Activated T-helper 1 cell treated with anti-CD3 and anti-CD28 coated beads, Interleukin-12 subunit alpha, Interleukin-12 subunit beta, Interleukin-2, Interleukin-4 antibody, amounts not matched to agents 30 ng/mL and 10 ng/mL and 1 ng/mL, durations not matched to agents 14 hours and 24 hours and 36 hours (primary cell): ENCODE measurements at regions of chr17 and their contacts with region 1.

Region 1: GRCh38 chr17:17972126-17972951 is at the starts of genes DRC3 and TOM1L2:
- DNase-seq: peak; percentile 100
- H3K4me3 Mint-ChIP-seq: peak within 1 kb of the TSS; percentile 94
- H3K27ac Mint-ChIP-seq: peak within 1 kb of the TSS; percentile 89
- H3K4me1 Mint-ChIP-seq: peaks cover 35% of the 10 kb centered on the region
- H3K27me3 Mint-ChIP-seq: peaks cover 2% of the 10 kb centered on the region
- total RNA-seq, gene DRC3: not detected in 2 replicates
- total RNA-seq, gene TOM1L2: 9.3 and 10.2 TPM in 2 replicates

Region 2: GRCh38 chr17:17237026-17237799 is 735.1 kb before region 1 on chr17 and contains the start of gene FLCN:
- intact Hi-C with region 1: loop called (anchors 1 kb)
- DNase-seq: peak; percentile 84
- H3K4me3 Mint-ChIP-seq: peak within 1 kb of the TSS; percentile 94
- H3K27ac Mint-ChIP-seq: peak within 1 kb of the TSS; percentile 99
- H3K4me1 Mint-ChIP-seq: peaks cover 25% of the 10 kb centered on the region
- H3K27me3 Mint-ChIP-seq: peaks cover 4% of the 10 kb centered on the region
- total RNA-seq, gene FLCN: 35.5 and 36.4 TPM in 2 replicates

Region 3: GRCh38 chr17:17681187-17681848 is 291.0 kb before region 1 on chr17 and contains the start of gene RAI1:
- intact Hi-C with region 1: loop called (anchors 5 kb)
- DNase-seq: peak; percentile 64
- H3K4me3 Mint-ChIP-seq: peak within 1 kb of the TSS; percentile 89
- H3K27ac Mint-ChIP-seq: peak within 1 kb of the TSS; percentile 84
- H3K4me1 Mint-ChIP-seq: peaks cover 22% of the 10 kb centered on the region
- H3K27me3 Mint-ChIP-seq: peaks cover 10% of the 10 kb centered on the region
- total RNA-seq, gene RAI1: 31.1 and 32.3 TPM in 2 replicates

Region 4: GRCh38 chr17:17859909-17860765 is 112.2 kb before region 1 on chr17:
- intact Hi-C with region 1: loop called (anchors 2 kb)
- DNase-seq: peak; percentile 59
- H3K4me3 Mint-ChIP-seq: no peak overlapping the region
- H3K27ac Mint-ChIP-seq: no peak overlapping the region
- H3K4me1 Mint-ChIP-seq: peaks cover 24% of the 10 kb centered on the region
- H3K27me3 Mint-ChIP-seq: no peaks in the 10 kb centered on the region

Region 5: GRCh38 chr17:17942846-17943245 is 29.5 kb before region 1 on chr17:
- intact Hi-C with region 1: no loop called
- DNase-seq: no peak
- H3K4me3 Mint-ChIP-seq: no peak overlapping the region
- H3K27ac Mint-ChIP-seq: no peak overlapping the region
- H3K4me1 Mint-ChIP-seq: peaks cover 11% of the 10 kb centered on the region
- H3K27me3 Mint-ChIP-seq: no peaks in the 10 kb centered on the region

Region 6: GRCh38 chr17:18038861-18039534 is 66.7 kb after region 1 on chr17 and contains the starts of genes ATPAF2 and GID4:
- intact Hi-C with region 1: loop called (anchors 1 kb)
- DNase-seq: peak; percentile 100
- H3K4me3 Mint-ChIP-seq: peak within 1 kb of the TSS; percentile 100
- H3K27ac Mint-ChIP-seq: peak within 1 kb of the TSS; percentile 99
- H3K4me1 Mint-ChIP-seq: peaks cover 43% of the 10 kb centered on the region
- H3K27me3 Mint-ChIP-seq: no peaks in the 10 kb centered on the region
- total RNA-seq, gene ATPAF2: 34.9 and 37.8 TPM in 2 replicates
- total RNA-seq, gene GID4: 9.6 and 10.0 TPM in 2 replicates

Region 7: GRCh38 chr17:18183334-18184142 is 211.2 kb after region 1 on chr17 and contains the start of gene ALKBH5:
- intact Hi-C with region 1: loop called (anchors 5 kb)
- DNase-seq: peak; percentile 95
- H3K4me3 Mint-ChIP-seq: peak within 1 kb of the TSS; percentile 98
- H3K27ac Mint-ChIP-seq: peak within 1 kb of the TSS; percentile 97
- H3K4me1 Mint-ChIP-seq: peaks cover 64% of the 10 kb centered on the region
- H3K27me3 Mint-ChIP-seq: no peaks in the 10 kb centered on the region
- total RNA-seq, gene ALKBH5: 127 and 128 TPM in 2 replicates